ENCODE measurements at regions of chr1 and their contacts with region 1.

Region 1: GRCh38 chr1:235045034-235045720 is 83.5 kb downstream of the TOMM20 start:
- DNase-seq: no peak
- ATAC-seq: no peak
- H3K4me3 ChIP-seq: no peak overlapping the region
- H3K4me3 Mint-ChIP-seq: no peak overlapping the region
- H3K27ac ChIP-seq: no peak overlapping the region
- H3K27ac Mint-ChIP-seq: no peak overlapping the region
- H3K4me1 ChIP-seq: peaks cover 0 to 17% of the 10 kb centered on the region in 2 experiments
- H3K4me1 Mint-ChIP-seq: peaks cover 6 to 35% (median 17%) of the 10 kb centered on the region in 3 donors
- H3K27me3 ChIP-seq: no peaks in the 10 kb centered on the region
- H3K27me3 Mint-ChIP-seq: no peaks in the 10 kb centered on the region

Region 2: GRCh38 chr1:234772345-234773147 is 272.6 kb before region 1 on chr1:
- CTCF ChIA-PET with region 1: no interaction called
- POLR2A ChIA-PET with region 1: interaction called in 1 of 2 experiments, 11 read pairs
- DNase-seq: peak; percentile 60 to 91 (median 79)
- ATAC-seq: peak; percentile 87 to 93 (median 92)
- H3K4me3 ChIP-seq: peak overlapping the region in 1 of 2 donors; percentile 34
- H3K4me3 Mint-ChIP-seq: peak overlapping the region; percentile 64 to 74 (median 65)
- H3K27ac ChIP-seq: peak overlapping the region; percentile 88
- H3K27ac Mint-ChIP-seq: peak overlapping the region; percentile 91 to 94
- H3K4me1 ChIP-seq: peaks cover 45 to 59% of the 10 kb centered on the region in 2 experiments
- H3K4me1 Mint-ChIP-seq: peaks cover 56 to 58% (median 57%) of the 10 kb centered on the region in 3 donors
- H3K27me3 ChIP-seq: peaks cover 0 to 12% of the 10 kb centered on the region in 2 experiments
- H3K27me3 Mint-ChIP-seq: no peaks in the 10 kb centered on the region

Region 3: GRCh38 chr1:234844479-234845031 is 200.6 kb before region 1 on chr1:
- CTCF ChIA-PET with region 1: interaction called in 1 of 2 experiments, 10 read pairs
- POLR2A ChIA-PET with region 1: no interaction called
- DNase-seq: peak in 2 of 35 experiments; percentile 11 to 52
- ATAC-seq: peak; percentile 28 to 43 (median 40)
- H3K4me3 ChIP-seq: peak overlapping the region in 1 of 2 donors; percentile 27
- H3K4me3 Mint-ChIP-seq: peak overlapping the region; percentile 39 to 59 (median 49)
- H3K27ac ChIP-seq: peak overlapping the region; percentile 48
- H3K27ac Mint-ChIP-seq: peak overlapping the region; percentile 84 to 86
- H3K4me1 ChIP-seq: peaks cover 34 to 36% of the 10 kb centered on the region in 2 experiments
- H3K4me1 Mint-ChIP-seq: peaks cover 58 to 73% (median 64%) of the 10 kb centered on the region in 3 donors
- H3K27me3 ChIP-seq: no peaks in the 10 kb centered on the region
- H3K27me3 Mint-ChIP-seq: no peaks in the 10 kb centered on the region

Region 4: DNA sequence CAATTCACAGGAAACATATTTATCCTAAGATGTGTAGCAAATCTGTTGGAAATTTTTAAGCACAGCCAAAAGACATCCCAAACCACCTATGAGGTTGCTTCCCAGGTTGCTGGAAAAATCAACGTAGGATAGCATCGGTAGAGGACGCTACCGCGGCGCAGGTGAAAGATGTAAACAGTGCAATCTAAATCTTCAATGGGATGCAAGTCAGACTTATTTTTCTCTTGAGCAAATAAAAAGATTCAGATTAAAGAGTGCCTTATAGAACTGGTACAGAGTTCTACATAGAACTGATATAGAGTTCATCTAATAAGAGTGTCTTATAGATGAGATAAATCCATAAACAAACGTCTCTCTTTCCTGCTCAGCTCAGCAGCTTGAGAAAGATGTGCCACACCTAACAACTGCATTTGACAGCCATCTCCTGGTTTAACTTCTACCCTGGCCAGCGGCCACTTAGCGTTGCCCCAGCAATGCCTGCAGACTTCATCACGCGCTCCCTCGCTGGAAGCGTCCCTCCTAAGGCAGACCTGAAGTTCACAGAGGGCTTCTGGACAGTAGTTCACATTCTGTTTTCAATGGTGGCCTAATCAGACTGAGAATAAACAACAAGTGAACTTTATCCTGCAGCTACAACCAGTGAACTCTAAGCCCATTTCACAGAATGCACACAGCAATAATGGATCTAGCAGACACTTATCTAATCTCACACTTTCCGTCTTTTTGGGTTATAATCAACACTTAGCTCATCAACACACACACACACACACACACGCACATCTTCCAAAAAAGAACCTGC is 81.1 kb before region 1 on chr1:
- CTCF ChIA-PET with region 1: no interaction called
- POLR2A ChIA-PET with region 1: no interaction called
- DNase-seq: no peak
- ATAC-seq: no peak
- H3K4me3 ChIP-seq: peak overlapping the region in 1 of 2 donors; percentile 8
- H3K4me3 Mint-ChIP-seq: peak overlapping the region in 2 of 3 donors; percentile 54 to 72
- H3K27ac ChIP-seq: peak overlapping the region; percentile 92
- H3K27ac Mint-ChIP-seq: peak overlapping the region; percentile 93 to 95
- H3K4me1 ChIP-seq: peaks cover 34 to 57% of the 10 kb centered on the region in 2 experiments
- H3K4me1 Mint-ChIP-seq: peaks cover 64 to 66% (median 64%) of the 10 kb centered on the region in 3 donors
- H3K27me3 ChIP-seq: no peaks in the 10 kb centered on the region
- H3K27me3 Mint-ChIP-seq: no peaks in the 10 kb centered on the region

Region 5: GRCh38 chr1:234978397-234979295 is 66.5 kb before region 1 on chr1:
- CTCF ChIA-PET with region 1: no interaction called
- POLR2A ChIA-PET with region 1: no interaction called
- DNase-seq: peak in 33 of 35 experiments; percentile 14 to 77 (median 45)
- ATAC-seq: peak; percentile 51 to 81 (median 58)
- H3K4me3 ChIP-seq: no peak overlapping the region
- H3K4me3 Mint-ChIP-seq: peak overlapping the region; percentile 21 to 75 (median 52)
- H3K27ac ChIP-seq: peak overlapping the region; percentile 94
- H3K27ac Mint-ChIP-seq: peak overlapping the region; percentile 90 to 97
- H3K4me1 ChIP-seq: peaks cover 25 to 42% of the 10 kb centered on the region in 2 experiments
- H3K4me1 Mint-ChIP-seq: peaks cover 41 to 79% (median 57%) of the 10 kb centered on the region in 3 donors
- H3K27me3 ChIP-seq: no peaks in the 10 kb centered on the region
- H3K27me3 Mint-ChIP-seq: no peaks in the 10 kb centered on the region